Motor neuron (in vitro differentiated cells): ENCODE measurements at regions of chr7 and their contacts with region 1.

Region 1: DNA sequence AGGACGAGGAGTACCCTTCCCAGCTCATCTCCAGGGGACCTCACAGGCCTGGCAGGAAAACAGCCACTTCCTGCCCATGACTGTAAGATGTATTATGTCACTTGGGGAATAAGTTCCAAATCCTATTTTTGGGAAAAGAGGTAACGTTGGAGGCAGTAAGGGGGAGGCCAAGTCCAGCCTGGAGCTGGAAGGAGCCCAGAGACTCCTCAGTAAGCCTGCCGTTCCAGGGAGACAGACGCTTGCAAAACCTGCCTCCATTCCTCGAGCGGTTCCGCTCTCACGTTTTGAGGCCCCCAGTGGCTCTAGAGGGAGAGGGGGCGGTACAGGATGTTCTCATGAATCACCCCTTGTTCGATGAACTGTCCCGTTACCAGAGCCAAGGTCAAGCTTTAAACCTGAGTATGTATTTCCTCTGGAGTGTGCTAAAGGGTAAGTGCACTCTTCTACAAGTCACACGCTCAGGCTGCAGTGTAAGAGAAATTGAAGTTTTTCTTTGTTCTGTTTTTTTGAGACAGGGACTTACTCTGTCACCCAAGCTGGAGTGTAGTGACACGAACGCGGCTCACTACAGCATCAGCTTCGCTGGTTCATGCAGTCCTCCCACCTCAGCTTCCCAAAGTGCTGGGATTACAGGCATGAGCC is 45.5 kb upstream of the CYTH3 start:
- ATAC-seq: peak in 1 of 8 experiments; percentile 41
- H3K4me3 ChIP-seq: no peak overlapping the region
- H3K27ac ChIP-seq: no peak overlapping the region
- H3K4me1 ChIP-seq: no peaks in the 10 kb centered on the region

Region 2: DNA sequence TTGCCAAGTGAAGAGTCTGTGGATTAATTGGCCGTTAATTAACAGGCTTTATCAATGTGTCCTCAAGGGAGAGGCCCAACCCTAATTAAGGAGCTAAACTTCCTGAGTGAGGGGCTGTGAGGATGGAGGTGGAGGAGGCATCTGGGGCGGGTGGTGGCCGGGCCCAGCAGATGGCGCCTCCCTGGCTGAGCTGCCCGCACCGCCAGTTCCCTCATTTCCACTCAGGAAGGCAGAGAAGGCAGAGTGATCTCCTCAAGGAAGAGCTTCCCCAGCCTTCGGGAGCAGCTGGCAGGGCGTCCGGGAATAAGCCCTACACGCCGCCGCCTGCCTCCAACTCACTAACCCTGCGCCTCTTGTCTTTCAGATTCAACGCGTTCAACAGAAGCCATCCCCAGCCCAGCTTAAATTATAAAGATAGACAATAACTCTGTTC is 157.7 kb before region 1 on chr7:
- in situ Hi-C with region 1: loop called in 3 of 9 experiments (anchors 25 kb)
- ATAC-seq: peak; percentile 56 to 90 (median 82)
- H3K4me3 ChIP-seq: no peak overlapping the region
- H3K27ac ChIP-seq: no peak overlapping the region
- H3K4me1 ChIP-seq: peaks cover 9% of the 10 kb centered on the region in 2 donors